ENCODE measurements at regions of chr14 and their contacts with region 1.

Region 1: DNA sequence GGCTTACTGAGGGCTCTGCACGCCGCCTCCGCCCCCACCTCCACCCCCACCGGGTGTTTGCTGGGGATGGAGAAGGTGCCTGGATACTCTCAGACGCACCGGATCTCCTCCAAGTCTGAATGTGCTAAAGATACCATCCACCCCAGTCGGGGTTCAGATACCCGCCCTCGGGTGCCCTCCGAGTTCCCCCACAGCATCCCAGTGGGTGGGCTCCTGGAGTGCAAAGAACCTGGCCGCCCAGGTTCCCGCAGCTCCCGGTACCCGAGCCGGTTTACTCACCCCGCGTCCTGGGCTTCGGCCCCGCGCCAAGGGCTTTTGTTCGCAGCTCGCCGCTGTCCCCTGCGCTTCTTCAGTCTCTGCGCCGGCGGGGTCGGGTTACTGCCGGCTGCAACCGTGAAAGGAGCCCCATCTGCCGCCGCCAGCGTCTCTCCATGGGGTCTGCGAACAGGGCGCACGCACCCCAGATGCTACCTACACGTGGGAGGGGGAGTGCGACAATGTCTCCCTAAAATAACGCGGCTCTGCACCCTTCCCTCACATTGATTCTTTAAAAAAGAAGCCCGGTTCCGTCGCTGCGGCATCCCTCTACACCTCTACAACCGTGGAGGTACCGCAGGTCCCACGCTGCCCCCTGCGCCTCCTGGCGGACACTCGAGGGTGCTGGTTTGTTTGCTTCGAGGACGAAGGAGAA is at the start of gene CCDC177:
- DNase-seq: peak; percentile 81
- ATAC-seq: peak; percentile 71
- H3K4me3 Mint-ChIP-seq: peak within 1 kb of the TSS; percentile 76
- H3K27ac Mint-ChIP-seq: no peak within 1 kb of the TSS
- H3K4me1 Mint-ChIP-seq: peaks cover 6% of the 10 kb centered on the region; the same call in 1 of the 2 replicates
- H3K27me3 Mint-ChIP-seq: peaks cover 65% of the 10 kb centered on the region
- CTCF ChIP-seq: peak; percentile 80
- total RNA-seq, gene CCDC177: 1.7 to 2.2 TPM (median 2.1 TPM) in 3 replicates

Region 2: DNA sequence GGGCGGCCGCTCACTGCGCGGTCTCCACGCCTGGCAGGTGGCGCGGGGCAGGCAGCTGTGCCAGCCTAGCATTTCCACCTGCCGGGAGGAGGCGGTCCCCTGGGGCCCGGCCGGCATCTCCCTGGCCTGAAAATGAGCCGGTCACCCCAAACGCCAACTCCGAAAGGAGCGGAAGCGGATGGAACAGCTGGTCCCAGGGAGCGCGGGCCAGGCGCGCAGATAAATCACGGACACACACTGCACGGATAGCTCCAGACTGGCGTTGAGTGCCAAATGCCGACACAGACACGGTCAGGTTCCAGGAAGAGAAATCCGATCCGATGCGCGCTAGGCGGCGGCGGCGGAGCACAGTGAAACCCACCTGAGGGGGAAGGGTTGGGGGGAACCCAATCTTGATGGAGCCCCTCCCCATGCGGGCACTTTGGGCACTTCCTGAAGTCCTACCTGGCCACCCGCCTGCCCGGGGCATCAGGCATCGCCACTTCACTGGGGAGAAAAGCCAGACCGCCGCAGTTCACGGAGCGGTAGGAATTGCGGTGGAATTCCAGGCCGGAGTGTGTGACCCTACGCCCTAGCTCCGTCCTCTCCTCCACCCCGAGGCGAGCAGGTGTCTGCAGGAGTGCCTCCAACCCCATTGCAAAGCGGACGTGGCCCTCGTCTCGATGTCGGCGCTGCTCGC is 90.5 kb before region 1 on chr14:
- CTCF ChIA-PET with region 1: interaction called, 11 read pairs
- POLR2A ChIA-PET with region 1: no interaction called
- DNase-seq: peak; percentile 64
- ATAC-seq: peak; percentile 61
- H3K4me3 Mint-ChIP-seq: peak overlapping the region; percentile 74
- H3K27ac Mint-ChIP-seq: no peak overlapping the region
- H3K4me1 Mint-ChIP-seq: peaks cover 17% of the 10 kb centered on the region
- H3K27me3 Mint-ChIP-seq: peaks cover 56% of the 10 kb centered on the region
- CTCF ChIP-seq: no peak

Region 3: GRCh38 chr14:69519204-69520100 is 55.0 kb before region 1 on chr14:
- CTCF ChIA-PET with region 1: interaction called, 14 read pairs
- POLR2A ChIA-PET with region 1: no interaction called
- DNase-seq: no peak
- ATAC-seq: peak; percentile 20; the same call in 1 of the 2 replicates
- H3K4me3 Mint-ChIP-seq: no peak overlapping the region
- H3K27ac Mint-ChIP-seq: 0 out of 2 replicates have a peak overlapping the region, but pooled peaks have one; percentile 4
- H3K4me1 Mint-ChIP-seq: peaks cover 23% of the 10 kb centered on the region
- H3K27me3 Mint-ChIP-seq: no peaks in the 10 kb centered on the region
- CTCF ChIP-seq: no peak

Region 4: DNA sequence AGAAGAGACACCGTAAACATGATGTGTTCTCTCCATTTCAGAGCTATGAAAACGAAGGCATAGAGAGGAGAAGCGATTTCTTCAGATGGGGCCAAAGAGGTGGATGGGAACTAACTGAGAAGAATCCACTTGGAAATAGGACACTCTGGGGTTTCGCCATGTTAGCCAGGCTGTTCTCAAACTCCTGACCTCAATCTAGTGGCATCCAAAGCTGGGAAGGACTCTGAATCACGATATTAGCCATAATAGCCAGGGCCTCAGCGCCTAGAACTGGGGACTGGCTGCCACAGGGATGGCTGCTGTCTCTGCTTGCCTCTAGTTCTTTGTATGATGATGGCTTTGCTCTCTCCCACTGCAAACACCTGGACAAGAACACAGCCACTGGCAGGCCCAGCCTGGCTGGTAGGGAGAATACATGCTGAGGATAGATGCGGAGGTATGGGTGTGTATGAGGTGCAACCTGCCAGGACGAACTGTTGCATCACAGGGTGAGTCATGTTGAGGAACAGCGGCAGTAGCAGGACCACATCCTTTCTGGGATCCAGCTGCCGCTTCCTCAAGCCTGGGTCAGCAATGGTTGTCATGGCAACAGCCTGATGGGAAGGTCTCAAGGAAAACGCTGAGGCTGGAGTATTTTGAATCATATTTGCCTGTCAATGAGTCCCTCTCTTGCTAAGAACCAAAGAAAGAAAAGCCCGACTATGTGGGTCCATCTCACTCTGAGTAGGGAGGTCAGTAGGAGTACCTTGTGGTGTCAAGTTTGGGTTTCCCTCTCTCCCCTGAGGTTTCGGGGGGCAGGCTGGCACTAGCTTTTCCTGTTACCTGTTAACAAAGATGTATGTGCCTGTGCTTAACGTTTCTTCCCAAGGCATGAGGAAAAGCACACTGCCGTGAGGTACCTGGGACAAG is 30.8 kb before region 1 on chr14:
- CTCF ChIA-PET with region 1: interaction called, 130 read pairs
- POLR2A ChIA-PET with region 1: interaction called, 4 read pairs
- DNase-seq: no peak
- ATAC-seq: no peak
- H3K4me3 Mint-ChIP-seq: no peak overlapping the region
- H3K27ac Mint-ChIP-seq: no peak overlapping the region
- H3K4me1 Mint-ChIP-seq: peaks cover 10% of the 10 kb centered on the region
- H3K27me3 Mint-ChIP-seq: peaks cover 12% of the 10 kb centered on the region; the same call in 1 of the 2 replicates
- CTCF ChIP-seq: no peak

Region 5: DNA sequence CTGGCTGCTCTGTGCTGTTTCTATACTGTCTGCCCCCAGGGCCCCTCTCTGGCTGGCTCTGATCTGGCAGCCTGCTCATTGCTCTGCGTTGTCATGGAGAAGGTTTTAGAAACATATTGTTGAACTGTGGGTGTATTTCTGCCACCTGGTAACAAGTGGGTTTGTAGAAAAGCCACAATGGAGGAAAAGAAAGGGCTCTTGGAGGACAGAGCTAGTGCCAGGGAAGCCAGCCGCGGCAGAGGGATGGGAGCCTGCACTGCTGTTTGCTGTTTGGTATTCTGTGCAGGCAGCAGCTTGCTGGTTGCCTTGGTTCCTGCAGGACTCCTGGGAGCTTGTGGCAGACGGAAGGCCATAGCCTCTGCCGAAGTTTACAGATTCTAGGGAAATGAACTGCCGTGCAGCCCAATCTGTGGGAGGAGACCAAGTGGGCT is 14.8 kb before region 1 on chr14:
- CTCF ChIA-PET with region 1: interaction called, 19 read pairs
- POLR2A ChIA-PET with region 1: no interaction called
- DNase-seq: no peak
- ATAC-seq: peak; percentile 55
- H3K4me3 Mint-ChIP-seq: no peak overlapping the region
- H3K27ac Mint-ChIP-seq: no peak overlapping the region
- H3K4me1 Mint-ChIP-seq: peaks cover 30% of the 10 kb centered on the region
- H3K27me3 Mint-ChIP-seq: no peaks in the 10 kb centered on the region; the same call in 1 of the 2 replicates
- CTCF ChIP-seq: no peak

Region 6: GRCh38 chr14:69593018-69593677 is 18.7 kb after region 1 on chr14:
- CTCF ChIA-PET with region 1: interaction called, 10 read pairs
- POLR2A ChIA-PET with region 1: interaction called, 3 read pairs
- DNase-seq: no peak
- ATAC-seq: no peak
- H3K4me3 Mint-ChIP-seq: no peak overlapping the region
- H3K27ac Mint-ChIP-seq: 0 out of 2 replicates have a peak overlapping the region, but pooled peaks have one; percentile 75
- H3K4me1 Mint-ChIP-seq: no peaks in the 10 kb centered on the region
- H3K27me3 Mint-ChIP-seq: no peaks in the 10 kb centered on the region
- CTCF ChIP-seq: no peak

Region 7: DNA sequence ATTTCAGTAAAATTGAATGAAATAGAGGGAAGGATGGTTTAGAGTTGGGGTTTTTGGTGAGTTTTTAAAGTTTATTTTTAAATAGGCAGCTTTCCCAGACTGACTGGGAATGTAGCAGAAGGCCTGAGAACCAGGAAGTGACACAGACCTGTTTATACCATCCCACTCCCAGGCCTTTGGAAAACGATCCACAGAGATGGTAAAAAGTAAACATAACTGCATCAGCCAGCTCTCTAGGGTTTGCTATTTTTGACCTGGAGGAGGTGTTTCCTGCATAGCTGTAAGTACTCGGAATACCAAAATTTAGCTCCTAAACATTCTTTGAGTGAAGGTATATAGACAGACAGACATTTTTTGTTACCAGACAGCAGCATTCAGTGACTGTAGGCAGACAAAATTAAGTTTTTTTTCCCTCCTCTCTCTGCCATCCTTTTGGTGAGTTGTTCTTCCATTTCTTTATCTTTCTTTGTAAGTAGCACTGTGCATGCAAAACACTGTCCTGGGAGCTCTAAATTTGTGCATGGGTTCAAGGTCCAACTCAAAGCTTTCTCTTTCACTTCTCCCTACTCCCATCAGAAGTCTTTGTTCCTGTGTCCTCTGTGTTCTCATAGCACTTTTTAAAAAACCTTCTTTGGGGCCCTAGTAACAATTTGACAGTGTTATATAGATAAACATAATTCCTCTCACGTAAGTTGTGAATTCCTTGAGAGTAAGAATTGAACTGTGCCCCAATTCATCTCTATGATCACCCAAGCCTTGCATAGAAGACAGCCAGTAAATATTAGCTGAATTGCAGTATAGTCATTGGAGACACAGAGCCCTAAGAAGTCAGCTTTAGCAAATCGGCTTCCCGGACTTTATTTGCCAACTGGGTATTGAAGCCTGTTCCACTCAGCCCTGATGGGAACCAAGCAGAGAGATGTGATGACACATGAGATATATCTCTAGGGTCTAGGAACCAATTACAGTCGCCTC is 74.4 kb after region 1 on chr14:
- CTCF ChIA-PET with region 1: no interaction called
- POLR2A ChIA-PET with region 1: no interaction called
- DNase-seq: no peak
- ATAC-seq: no peak; the same call in 1 of the 2 replicates
- H3K4me3 Mint-ChIP-seq: no peak overlapping the region
- H3K27ac Mint-ChIP-seq: peak overlapping the region; percentile 54
- H3K4me1 Mint-ChIP-seq: peaks cover 56% of the 10 kb centered on the region
- H3K27me3 Mint-ChIP-seq: no peaks in the 10 kb centered on the region
- CTCF ChIP-seq: no peak